Left lung (tissue), 14 donors: ENCODE measurements at regions of chr17 and their contacts with region 1.

Region 1: DNA sequence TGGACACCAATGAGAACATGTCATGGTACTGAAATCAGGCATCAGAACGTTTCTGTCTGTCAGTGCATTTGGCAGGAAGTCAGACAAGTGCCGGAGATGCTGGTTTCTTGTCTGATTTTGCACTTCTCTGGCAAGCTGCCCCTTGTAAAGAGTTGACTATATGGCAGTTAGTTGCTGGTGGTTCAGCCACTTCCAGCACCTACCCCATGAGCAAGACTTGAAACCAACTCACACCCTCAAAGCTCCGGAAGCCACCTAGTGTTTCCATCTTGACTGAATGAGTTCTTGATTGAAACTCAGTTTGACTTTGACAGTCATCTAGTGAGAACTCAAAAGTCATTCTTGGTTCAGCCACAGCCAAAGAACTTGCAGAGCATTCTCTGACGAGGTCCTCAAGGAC is 225.1 kb downstream of the SPECC1 start:
- DNase-seq: no peak
- ATAC-seq: no peak
- H3K4me3 ChIP-seq: no peak overlapping the region
- H3K27ac ChIP-seq: no peak overlapping the region
- H3K4me1 ChIP-seq: no peaks in the 10 kb centered on the region
- H3K27me3 ChIP-seq: no peaks in the 10 kb centered on the region
- CTCF ChIP-seq: no peak

Region 2: GRCh38 chr17:20114466-20114865 is 119.8 kb before region 1 on chr17:
- intact Hi-C with region 1: no loop called
- DNase-seq: no peak
- ATAC-seq: no peak
- H3K4me3 ChIP-seq: no peak overlapping the region
- H3K27ac ChIP-seq: no peak overlapping the region
- H3K4me1 ChIP-seq: no peaks in the 10 kb centered on the region
- H3K27me3 ChIP-seq: peaks cover 0 to 5% of the 10 kb centered on the region in 2 donors
- CTCF ChIP-seq: no peak

Region 3: GRCh38 chr17:20291853-20292252 is 57.6 kb after region 1 on chr17:
- intact Hi-C with region 1: no loop called
- DNase-seq: no peak
- ATAC-seq: no peak
- H3K4me3 ChIP-seq: no peak overlapping the region
- H3K27ac ChIP-seq: no peak overlapping the region
- H3K4me1 ChIP-seq: no peaks in the 10 kb centered on the region
- H3K27me3 ChIP-seq: no peaks in the 10 kb centered on the region
- CTCF ChIP-seq: no peak

Region 4: DNA sequence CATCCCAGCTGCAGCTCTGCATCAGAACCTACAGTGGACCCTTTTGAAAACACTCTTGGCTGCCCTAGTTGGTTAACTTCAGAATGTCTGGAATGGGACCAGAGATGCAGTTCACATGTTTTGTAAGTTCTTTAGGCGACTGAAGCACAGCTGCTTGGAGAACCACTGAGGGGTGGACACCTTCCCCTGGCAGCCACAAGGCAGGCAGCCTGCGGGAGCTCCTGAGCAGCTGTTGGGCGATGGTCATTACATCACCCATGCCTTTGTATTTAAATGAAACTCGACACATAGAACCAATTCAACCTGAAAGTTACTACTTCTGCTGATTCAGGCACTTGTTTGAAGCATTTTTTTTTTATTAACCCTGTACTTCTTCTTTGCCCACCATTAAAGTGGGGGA is 81.5 kb after region 1 on chr17:
- intact Hi-C with region 1: loop called in 1 of 2 experiments (anchors 10 kb)
- DNase-seq: no peak
- ATAC-seq: no peak
- H3K4me3 ChIP-seq: no peak overlapping the region
- H3K27ac ChIP-seq: no peak overlapping the region
- H3K4me1 ChIP-seq: peaks cover 3% of the 10 kb centered on the region in 2 donors
- H3K27me3 ChIP-seq: peaks cover 0 to 7% of the 10 kb centered on the region in 2 donors
- CTCF ChIP-seq: no peak